Naive thymus-derived CD4-positive, alpha-beta T cell (primary cell): ENCODE measurements at regions of chr6 and their contacts with region 1.

Region 1: DNA sequence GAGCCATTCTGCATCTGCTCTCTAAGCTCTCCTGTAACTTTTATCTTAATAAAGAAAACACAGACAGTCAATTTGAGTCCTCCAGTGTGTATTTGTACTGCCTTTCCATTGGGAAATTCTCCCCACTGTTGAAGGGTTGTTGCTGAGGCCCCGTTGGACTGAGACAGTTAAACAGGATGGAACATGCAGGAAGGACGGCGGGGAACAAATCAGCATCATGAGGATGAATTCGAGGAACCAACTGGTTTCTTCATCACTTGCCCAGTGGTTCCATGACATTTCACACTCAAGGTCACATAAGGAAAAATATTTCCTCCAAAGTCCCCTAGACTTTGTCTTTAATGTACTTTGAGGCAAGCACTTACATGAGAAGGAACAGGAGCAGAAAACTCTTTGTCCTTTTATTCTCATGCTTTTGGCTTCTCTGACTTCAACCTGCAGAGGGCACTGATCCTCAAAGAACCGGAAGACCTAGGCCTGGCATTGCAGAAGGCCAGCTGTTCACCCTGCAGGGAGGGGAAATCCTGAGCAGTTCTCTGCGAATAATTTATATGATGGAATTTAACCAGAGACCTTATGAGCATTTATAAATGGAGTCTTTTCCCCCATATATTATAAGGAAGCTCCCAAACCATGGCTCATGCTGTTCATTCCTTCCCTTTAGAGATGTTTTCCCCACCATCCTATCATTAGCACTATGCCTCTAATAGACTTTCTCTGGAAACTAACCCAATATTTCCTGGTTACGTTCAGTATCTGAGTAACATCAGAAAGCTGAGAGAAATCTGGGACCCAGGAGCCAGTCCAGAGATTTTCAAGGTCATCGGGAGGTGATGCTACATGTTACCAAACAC is 55.2 kb upstream of the ADGRF1 start:
- DNase-seq: peak in 7 of 9 donors; percentile 8 to 49 (median 30)
- ATAC-seq: peak; percentile 74
- H3K4me3 ChIP-seq: no peak overlapping the region
- H3K4me3 Mint-ChIP-seq: no peak overlapping the region
- H3K27ac ChIP-seq: no peak overlapping the region
- H3K27ac Mint-ChIP-seq: no peak overlapping the region
- H3K4me1 ChIP-seq: no peaks in the 10 kb centered on the region
- H3K4me1 Mint-ChIP-seq: no peaks in the 10 kb centered on the region
- H3K27me3 ChIP-seq: no peaks in the 10 kb centered on the region
- H3K27me3 Mint-ChIP-seq: peaks cover 0 to 10% (median 3%) of the 10 kb centered on the region in 5 donors

Region 2: DNA sequence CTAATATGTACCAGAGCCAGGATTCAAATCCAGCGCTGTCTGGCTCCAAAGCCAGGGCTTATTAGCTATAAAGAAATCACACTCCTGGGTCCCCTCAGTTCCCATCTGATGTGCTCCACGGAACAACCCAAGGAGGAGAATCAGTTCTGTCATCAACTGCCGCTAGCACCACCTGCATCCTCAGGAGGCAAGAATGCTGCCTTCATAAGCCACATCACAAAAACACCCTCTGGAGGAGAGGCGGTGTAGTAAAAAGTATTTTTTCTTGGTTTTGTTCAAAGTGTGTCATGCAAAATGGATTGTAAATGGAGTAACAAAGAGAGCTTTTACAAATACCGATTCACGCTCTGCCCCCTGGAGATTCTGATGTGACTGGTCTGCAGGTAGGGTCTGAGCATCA is 155.3 kb after region 1 on chr6:
- CTCF ChIA-PET with region 1: no interaction called
- POLR2A ChIA-PET with region 1: no interaction called
- intact Hi-C with region 1: loop called in 1 of 2 experiments (anchors 1 kb)
- DNase-seq: peak in 5 of 9 donors; percentile 10 to 28 (median 18)
- ATAC-seq: no peak
- H3K4me3 ChIP-seq: no peak overlapping the region
- H3K4me3 Mint-ChIP-seq: no peak overlapping the region
- H3K27ac ChIP-seq: no peak overlapping the region
- H3K27ac Mint-ChIP-seq: no peak overlapping the region
- H3K4me1 ChIP-seq: peaks cover 0 to 5% of the 10 kb centered on the region in 2 donors
- H3K4me1 Mint-ChIP-seq: peaks cover 0 to under 1% (median 0%) of the 10 kb centered on the region in 7 donors
- H3K27me3 ChIP-seq: no peaks in the 10 kb centered on the region
- H3K27me3 Mint-ChIP-seq: peaks cover 0 to 12% (median 5%) of the 10 kb centered on the region in 5 donors